Activated CD8-positive, alpha-beta T cell treated with anti-CD3 and anti-CD28 coated beads, Interleukin-2, amount 10 ng/mL, durations not matched to agents 7 days and 5 days (primary cell): ENCODE measurements at regions of chr5 and their contacts with region 1.

Region 1: GRCh38 chr5:142587354-142587965 is 98.4 kb downstream of the FGF1 start:
- DNase-seq: peak; percentile 67
- ATAC-seq: no peak
- H3K4me3 Mint-ChIP-seq: no peak overlapping the region
- H3K27ac Mint-ChIP-seq: no peak overlapping the region
- H3K4me1 Mint-ChIP-seq: no peaks in the 10 kb centered on the region
- H3K27me3 Mint-ChIP-seq: peaks cover 36% of the 10 kb centered on the region

Region 2: GRCh38 chr5:142540922-142541422 is 46.5 kb before region 1 on chr5:
- CTCF ChIA-PET with region 1: no interaction called
- POLR2A ChIA-PET with region 1: no interaction called
- DNase-seq: no peak
- ATAC-seq: no peak
- H3K4me3 Mint-ChIP-seq: no peak overlapping the region
- H3K27ac Mint-ChIP-seq: no peak overlapping the region
- H3K4me1 Mint-ChIP-seq: peaks cover 2% of the 10 kb centered on the region
- H3K27me3 Mint-ChIP-seq: peaks cover 18% of the 10 kb centered on the region

Region 3: GRCh38 chr5:142576303-142576702 is 11.2 kb before region 1 on chr5:
- CTCF ChIA-PET with region 1: interaction called, 12 read pairs
- POLR2A ChIA-PET with region 1: no interaction called
- DNase-seq: no peak
- ATAC-seq: no peak
- H3K4me3 Mint-ChIP-seq: no peak overlapping the region
- H3K27ac Mint-ChIP-seq: no peak overlapping the region
- H3K4me1 Mint-ChIP-seq: peaks cover 28% of the 10 kb centered on the region
- H3K27me3 Mint-ChIP-seq: peaks cover 10% of the 10 kb centered on the region

Region 4: DNA sequence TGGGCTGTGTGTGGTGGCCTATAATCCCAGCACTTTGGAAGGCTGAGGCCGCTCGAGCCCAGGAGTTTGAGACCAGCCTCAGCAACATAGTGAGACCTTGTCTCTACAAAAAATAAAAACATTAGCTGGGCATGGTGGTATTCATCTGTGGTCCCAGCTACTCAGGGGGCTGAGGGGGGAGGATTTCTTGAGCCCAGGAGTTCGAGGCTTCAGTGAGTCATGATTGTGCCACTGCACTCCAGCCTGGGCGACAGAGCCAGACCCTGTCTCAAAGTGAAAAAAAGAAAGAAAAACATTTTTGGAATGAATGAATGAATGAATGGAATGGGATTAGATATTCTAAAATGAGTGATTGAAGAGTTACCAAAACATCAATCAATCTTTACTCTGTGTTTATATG is 12.6 kb after region 1 on chr5:
- CTCF ChIA-PET with region 1: interaction called, 11 read pairs
- POLR2A ChIA-PET with region 1: no interaction called
- DNase-seq: no peak
- ATAC-seq: no peak
- H3K4me3 Mint-ChIP-seq: no peak overlapping the region
- H3K27ac Mint-ChIP-seq: no peak overlapping the region
- H3K4me1 Mint-ChIP-seq: no peaks in the 10 kb centered on the region
- H3K27me3 Mint-ChIP-seq: peaks cover 36% of the 10 kb centered on the region

Region 5: GRCh38 chr5:142685418-142686209 is 98.2 kb after region 1 on chr5 and contains the start of gene FGF1:
- CTCF ChIA-PET with region 1: no interaction called
- POLR2A ChIA-PET with region 1: no interaction called
- DNase-seq: no peak
- ATAC-seq: no peak
- H3K4me3 Mint-ChIP-seq: no peak within 1 kb of the TSS
- H3K27ac Mint-ChIP-seq: no peak within 1 kb of the TSS
- H3K4me1 Mint-ChIP-seq: no peaks in the 10 kb centered on the region
- H3K27me3 Mint-ChIP-seq: peaks cover 8% of the 10 kb centered on the region
- total RNA-seq, gene FGF1: not detected